Activated CD4-positive, alpha-beta T cell treated with anti-CD3 and anti-CD28 coated beads for 36 hours (primary cell): ENCODE measurements at regions of chr9 and their contacts with region 1.

Region 1: DNA sequence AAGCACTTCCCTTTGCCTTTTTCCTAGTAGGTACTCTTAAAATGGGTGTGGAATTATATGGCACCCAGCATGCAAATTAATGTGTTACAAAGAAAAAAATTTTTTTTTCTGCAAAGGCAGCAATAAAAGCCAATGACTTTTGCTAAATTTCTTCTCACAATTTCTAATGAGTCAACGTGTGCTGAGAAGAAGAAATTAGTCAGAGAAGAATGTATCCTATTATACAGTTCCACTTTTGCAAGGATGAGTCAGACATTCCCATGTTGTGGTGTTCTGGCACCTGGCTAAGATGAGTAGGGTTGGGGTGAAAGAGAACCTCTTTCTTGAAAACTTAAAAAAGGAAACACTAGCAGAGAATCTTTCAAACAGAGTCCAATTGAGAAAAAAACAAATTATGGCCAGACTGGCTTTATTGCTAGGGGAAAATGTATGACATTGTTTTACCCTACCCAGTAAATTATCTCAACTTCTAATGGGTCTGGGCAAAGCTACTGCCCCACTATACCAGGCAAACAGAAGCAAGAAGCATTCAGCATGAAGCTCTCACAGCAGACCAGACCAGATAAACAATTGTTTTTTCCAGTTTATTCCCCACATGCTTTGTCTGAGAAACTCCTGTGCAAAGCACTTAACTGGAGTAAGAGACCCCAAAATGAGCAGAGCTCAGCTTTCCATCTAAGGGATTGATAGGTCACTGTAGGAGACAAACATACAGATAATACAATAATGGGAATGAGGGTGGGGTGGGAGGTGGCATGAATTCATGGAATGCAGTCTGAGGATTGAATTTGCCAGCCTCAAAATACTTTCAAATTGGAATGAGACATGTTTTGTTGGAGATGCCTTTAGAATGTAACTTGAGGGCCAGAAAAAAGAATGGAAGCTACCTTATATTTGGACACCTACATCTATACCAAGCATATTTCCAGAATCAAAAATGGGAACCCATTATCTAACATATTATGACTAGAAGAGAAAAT is 220.8 kb upstream of the RFX3 start:
- DNase-seq: peak; percentile 72
- ATAC-seq: peak; percentile 97
- H3K4me3 Mint-ChIP-seq: no peak overlapping the region
- H3K27ac Mint-ChIP-seq: peak overlapping the region; percentile 81
- H3K4me1 Mint-ChIP-seq: peaks cover 32% of the 10 kb centered on the region
- H3K27me3 Mint-ChIP-seq: peaks cover 7% of the 10 kb centered on the region

Region 2: GRCh38 chr9:3758816-3759576 is 12.4 kb after region 1 on chr9:
- CTCF ChIA-PET with region 1: no interaction called
- POLR2A ChIA-PET with region 1: no interaction called
- intact Hi-C with region 1: loop called in 1 of 2 experiments (anchors 1 kb)
- DNase-seq: peak; percentile 17
- ATAC-seq: no peak
- H3K4me3 Mint-ChIP-seq: no peak overlapping the region
- H3K27ac Mint-ChIP-seq: no peak overlapping the region
- H3K4me1 Mint-ChIP-seq: peaks cover 17% of the 10 kb centered on the region
- H3K27me3 Mint-ChIP-seq: peaks cover 5% of the 10 kb centered on the region

Region 3: GRCh38 chr9:3868012-3868411 is 121.4 kb after region 1 on chr9:
- CTCF ChIA-PET with region 1: no interaction called
- POLR2A ChIA-PET with region 1: no interaction called
- intact Hi-C with region 1: loop called in 1 of 2 experiments (anchors 5 kb)
- DNase-seq: peak; percentile 22
- ATAC-seq: peak; percentile 84
- H3K4me3 Mint-ChIP-seq: no peak overlapping the region
- H3K27ac Mint-ChIP-seq: no peak overlapping the region
- H3K4me1 Mint-ChIP-seq: peaks cover 15% of the 10 kb centered on the region
- H3K27me3 Mint-ChIP-seq: peaks cover 22% of the 10 kb centered on the region

Region 4: GRCh38 chr9:4297151-4297785 is 550.7 kb after region 1 on chr9:
- CTCF ChIA-PET with region 1: no interaction called
- POLR2A ChIA-PET with region 1: no interaction called
- intact Hi-C with region 1: loop called (anchors 5 to 10 kb)
- DNase-seq: peak; percentile 65
- ATAC-seq: peak; percentile 37
- H3K4me3 Mint-ChIP-seq: peak overlapping the region; percentile 86
- H3K27ac Mint-ChIP-seq: peak overlapping the region; percentile 86
- H3K4me1 Mint-ChIP-seq: peaks cover 45% of the 10 kb centered on the region
- H3K27me3 Mint-ChIP-seq: peaks cover 32% of the 10 kb centered on the region